Sigmoid colon (tissue), 7 donors: ENCODE measurements at regions of chr11 and their contacts with region 1.

Region 1: DNA sequence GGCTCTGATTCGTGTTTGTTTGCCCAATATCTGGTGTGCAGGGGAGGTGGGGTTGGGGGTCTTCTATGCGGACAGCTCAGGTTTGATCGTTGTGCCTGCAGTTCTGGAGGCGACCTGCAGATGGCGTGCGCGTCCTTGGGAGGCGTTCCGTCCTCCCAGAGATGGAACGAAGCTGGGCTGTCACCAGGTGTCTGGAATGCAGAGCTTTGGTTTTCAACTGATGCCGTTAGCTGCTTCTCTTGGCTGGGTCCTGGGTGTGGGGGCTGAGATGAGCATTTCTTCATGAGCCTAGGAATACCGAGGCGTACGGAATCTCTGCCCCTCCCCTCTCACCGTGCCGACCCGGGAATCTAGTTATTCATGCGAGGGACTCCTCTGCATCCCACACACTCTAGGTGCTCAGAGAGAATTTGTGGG is 98.6 kb downstream of the CEP164 start:
- DNase-seq: peak; percentile 82
- H3K4me3 ChIP-seq: no peak overlapping the region
- H3K27ac ChIP-seq: no peak overlapping the region
- H3K4me1 ChIP-seq: peaks cover 0 to 7% (median 5%) of the 10 kb centered on the region in 4 donors
- H3K27me3 ChIP-seq: no peaks in the 10 kb centered on the region
- CTCF ChIP-seq: peak; percentile 84 to 98 (median 94)
- EP300 ChIP-seq: no peak
- POLR2A ChIP-seq: no peak

Region 2: GRCh38 chr11:116993599-116993998 is 432.7 kb before region 1 on chr11:
- intact Hi-C with region 1: no loop called
- DNase-seq: no peak
- H3K4me3 ChIP-seq: no peak overlapping the region
- H3K27ac ChIP-seq: peak overlapping the region in 2 of 4 donors; percentile 12 to 21
- H3K4me1 ChIP-seq: peaks cover 0 to 45% (median 34%) of the 10 kb centered on the region in 4 donors
- H3K27me3 ChIP-seq: no peaks in the 10 kb centered on the region
- CTCF ChIP-seq: no peak
- EP300 ChIP-seq: no peak
- POLR2A ChIP-seq: no peak

Region 3: DNA sequence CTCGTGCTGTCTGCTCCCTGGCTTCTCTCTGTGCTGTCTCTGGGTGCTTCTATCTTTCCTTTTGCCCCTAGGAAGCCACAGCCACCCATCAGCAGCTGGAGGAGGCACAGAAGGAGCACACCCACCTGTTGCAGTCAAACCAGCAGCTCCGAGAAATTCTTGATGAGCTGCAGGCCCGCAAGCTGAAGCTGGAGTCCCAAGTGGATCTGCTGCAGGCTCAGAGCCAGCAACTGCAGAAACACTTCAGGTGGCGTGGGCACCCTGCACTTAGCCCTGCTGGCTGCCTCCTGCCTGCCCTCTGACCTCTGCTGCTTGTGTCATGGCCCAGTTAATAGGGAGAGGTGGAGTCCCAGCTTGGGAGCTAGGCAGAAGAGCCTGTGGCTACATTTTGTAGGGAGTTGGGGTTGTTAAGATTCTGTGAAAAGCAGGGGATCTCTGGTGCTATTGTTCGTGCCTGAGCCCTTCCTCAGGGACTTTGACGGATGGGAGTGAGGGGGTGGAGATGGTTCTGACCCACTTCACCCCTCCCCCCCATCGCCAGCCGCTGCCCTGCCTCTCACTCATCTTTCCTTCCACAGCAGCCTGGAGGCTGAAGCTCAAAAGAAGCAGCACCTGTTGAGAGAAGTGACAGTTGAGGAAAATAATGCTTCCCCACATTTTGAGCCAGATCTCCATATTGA is 30.7 kb before region 1 on chr11:
- intact Hi-C with region 1: no loop called
- DNase-seq: peak; percentile 15
- H3K4me3 ChIP-seq: no peak overlapping the region
- H3K27ac ChIP-seq: no peak overlapping the region
- H3K4me1 ChIP-seq: no peaks in the 10 kb centered on the region
- H3K27me3 ChIP-seq: no peaks in the 10 kb centered on the region
- CTCF ChIP-seq: no peak
- EP300 ChIP-seq: no peak
- POLR2A ChIP-seq: no peak

Region 4: GRCh38 chr11:117458275-117458674 is 32.0 kb after region 1 on chr11:
- intact Hi-C with region 1: no loop called
- DNase-seq: no peak
- H3K4me3 ChIP-seq: no peak overlapping the region
- H3K27ac ChIP-seq: no peak overlapping the region
- H3K4me1 ChIP-seq: no peaks in the 10 kb centered on the region
- H3K27me3 ChIP-seq: no peaks in the 10 kb centered on the region
- CTCF ChIP-seq: no peak
- EP300 ChIP-seq: no peak
- POLR2A ChIP-seq: no peak

Region 5: DNA sequence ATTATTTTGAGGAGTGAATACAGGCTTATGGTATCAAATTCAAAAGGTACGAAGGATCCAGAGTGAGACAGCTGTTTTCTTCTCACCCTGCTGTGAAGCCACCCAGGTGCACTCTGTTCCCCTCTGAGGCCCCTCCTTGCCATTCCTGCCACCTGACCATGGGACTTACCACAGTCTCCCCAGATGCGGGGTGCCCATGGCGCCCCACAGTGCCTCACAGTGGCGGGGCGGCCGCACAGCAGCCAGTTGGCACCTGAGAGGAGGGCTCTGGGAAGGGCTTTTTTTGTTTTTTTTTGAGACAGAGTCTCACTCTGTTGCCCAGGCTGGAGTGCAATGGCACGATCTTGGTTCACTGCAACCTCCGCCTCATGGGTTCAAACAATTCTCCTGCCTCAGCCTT is 53.1 kb after region 1 on chr11:
- intact Hi-C with region 1: no loop called
- DNase-seq: no peak
- H3K4me3 ChIP-seq: no peak overlapping the region
- H3K27ac ChIP-seq: no peak overlapping the region
- H3K4me1 ChIP-seq: no peaks in the 10 kb centered on the region
- H3K27me3 ChIP-seq: no peaks in the 10 kb centered on the region
- CTCF ChIP-seq: no peak
- EP300 ChIP-seq: no peak
- POLR2A ChIP-seq: no peak

Region 6: GRCh38 chr11:117817368-117818040 is 391.2 kb after region 1 on chr11:
- intact Hi-C with region 1: loop called (anchors 1 kb)
- DNase-seq: peak; percentile 91
- H3K4me3 ChIP-seq: peak overlapping the region in 2 of 4 donors; percentile 11 to 15
- H3K27ac ChIP-seq: peak overlapping the region; percentile 11 to 69 (median 38)
- H3K4me1 ChIP-seq: peaks cover 0 to 40% (median 32%) of the 10 kb centered on the region in 4 donors
- H3K27me3 ChIP-seq: no peaks in the 10 kb centered on the region
- CTCF ChIP-seq: peak; percentile 95 to 99 (median 98)
- EP300 ChIP-seq: no peak
- POLR2A ChIP-seq: no peak